Activated CD8-positive, alpha-beta T cell treated with anti-CD3 and anti-CD28 coated beads for 36 hours (primary cell): ENCODE measurements at regions of chr18 and their contacts with region 1.

Region 1: GRCh38 chr18:56748698-56749268 is 97.6 kb downstream of the WDR7 start:
- DNase-seq: peak; percentile 15
- ATAC-seq: no peak
- H3K4me3 Mint-ChIP-seq: no peak overlapping the region
- H3K27ac Mint-ChIP-seq: no peak overlapping the region
- H3K4me1 Mint-ChIP-seq: peaks cover 23% of the 10 kb centered on the region
- H3K27me3 Mint-ChIP-seq: no peaks in the 10 kb centered on the region
- CTCF ChIP-seq: peak; percentile 61

Region 2: GRCh38 chr18:56804395-56804794 is 55.6 kb after region 1 on chr18:
- CTCF ChIA-PET with region 1: no interaction called
- POLR2A ChIA-PET with region 1: no interaction called
- intact Hi-C with region 1: no loop called
- DNase-seq: no peak
- ATAC-seq: peak; percentile 30
- H3K4me3 Mint-ChIP-seq: no peak overlapping the region
- H3K27ac Mint-ChIP-seq: no peak overlapping the region
- H3K4me1 Mint-ChIP-seq: peaks cover 3% of the 10 kb centered on the region
- H3K27me3 Mint-ChIP-seq: no peaks in the 10 kb centered on the region
- CTCF ChIP-seq: no peak

Region 3: DNA sequence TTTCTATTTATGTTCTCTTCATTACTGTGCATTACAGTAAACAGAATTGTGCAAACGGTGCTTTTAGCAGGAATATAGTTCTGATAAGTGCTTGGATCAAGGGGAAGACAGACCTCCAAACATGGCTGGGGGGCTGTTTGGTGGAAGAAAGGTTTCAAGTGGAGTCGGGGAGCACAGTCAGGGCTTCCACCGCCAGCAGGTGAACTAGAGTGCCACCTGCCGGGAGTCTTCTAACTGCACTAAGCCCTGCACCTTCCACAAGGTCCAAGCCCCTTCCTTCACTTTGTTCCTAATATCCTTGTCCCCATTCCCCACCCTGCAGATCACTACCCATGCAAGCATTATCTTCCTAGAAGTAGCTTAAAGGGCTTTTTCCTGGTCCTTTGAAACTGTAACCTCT is 697.5 kb after region 1 on chr18:
- CTCF ChIA-PET with region 1: no interaction called
- POLR2A ChIA-PET with region 1: no interaction called
- intact Hi-C with region 1: loop called (anchors 10 kb)
- DNase-seq: peak; percentile 57
- ATAC-seq: no peak
- H3K4me3 Mint-ChIP-seq: no peak overlapping the region
- H3K27ac Mint-ChIP-seq: no peak overlapping the region
- H3K4me1 Mint-ChIP-seq: peaks cover 3% of the 10 kb centered on the region
- H3K27me3 Mint-ChIP-seq: peaks cover 53% of the 10 kb centered on the region
- CTCF ChIP-seq: peak; percentile 55